Heart right ventricle (tissue), 16 donors: ENCODE measurements at regions of chr22 and their contacts with region 1.

Region 1: DNA sequence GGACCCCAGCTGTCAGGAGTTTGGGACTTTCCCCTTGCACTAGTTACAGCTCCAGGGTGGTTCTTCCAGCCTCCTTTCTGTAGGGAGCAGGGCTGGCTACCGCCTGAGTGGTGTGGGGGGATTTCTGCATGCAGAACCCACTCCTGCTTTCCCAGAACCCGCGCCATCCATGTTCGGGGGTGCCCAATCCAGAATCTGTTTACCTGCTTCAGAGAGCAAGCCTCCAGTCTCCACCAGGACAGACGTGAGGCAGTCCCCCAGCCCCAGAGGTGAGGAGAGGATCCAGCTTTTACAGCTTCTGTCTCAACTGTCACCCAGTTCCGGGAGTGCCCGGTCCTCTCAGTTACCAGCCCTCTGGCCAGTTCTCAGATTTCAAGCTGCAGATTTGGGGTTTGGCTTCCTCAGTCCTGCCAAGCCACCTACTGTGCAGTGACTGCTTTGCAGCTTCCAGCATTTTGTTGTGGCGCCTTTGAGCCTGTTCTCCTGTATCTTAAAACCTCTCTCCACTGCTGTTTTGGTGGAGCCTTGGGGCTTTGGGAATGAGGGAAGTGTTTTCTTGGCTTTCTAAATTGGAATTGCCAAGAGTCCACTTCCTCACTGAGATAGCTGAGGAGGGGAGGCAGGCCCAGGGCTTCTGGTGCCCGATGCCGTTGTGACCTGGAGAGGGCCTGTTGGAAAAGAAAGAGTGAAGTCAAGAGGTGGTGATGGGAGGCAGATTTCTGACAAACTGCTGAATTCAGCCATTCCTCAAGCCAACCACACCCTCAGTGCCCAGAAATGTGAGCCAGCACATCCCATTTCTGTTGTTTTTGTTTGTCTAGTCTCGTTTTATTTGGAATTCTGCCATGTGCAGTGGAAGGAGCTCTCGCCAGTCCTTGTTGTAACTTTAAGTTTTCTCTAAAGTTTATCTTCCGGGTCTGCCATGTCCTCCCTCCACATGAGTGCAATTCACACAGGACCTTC is 513.3 kb downstream of the TBC1D22A start:
- DNase-seq: no peak
- ATAC-seq: peak in 1 of 8 donors; percentile 9
- H3K4me3 ChIP-seq: no peak overlapping the region
- H3K27ac ChIP-seq: no peak overlapping the region
- H3K4me1 ChIP-seq: no peaks in the 10 kb centered on the region
- H3K27me3 ChIP-seq: peaks cover 0 to 49% (median 33%) of the 10 kb centered on the region in 7 donors
- CTCF ChIP-seq: no peak

Region 2: GRCh38 chr22:47289336-47289995 is 13.7 kb after region 1 on chr22:
- intact Hi-C with region 1: loop called in 1 of 10 experiments (anchors 2 kb)
- DNase-seq: no peak
- ATAC-seq: no peak
- H3K4me3 ChIP-seq: no peak overlapping the region
- H3K27ac ChIP-seq: no peak overlapping the region
- H3K4me1 ChIP-seq: no peaks in the 10 kb centered on the region
- H3K27me3 ChIP-seq: peaks cover 0 to 40% (median 13%) of the 10 kb centered on the region in 7 donors
- CTCF ChIP-seq: no peak

Region 3: GRCh38 chr22:47307326-47307725 is 31.6 kb after region 1 on chr22:
- intact Hi-C with region 1: no loop called
- DNase-seq: no peak
- ATAC-seq: no peak
- H3K4me3 ChIP-seq: no peak overlapping the region
- H3K27ac ChIP-seq: no peak overlapping the region
- H3K4me1 ChIP-seq: no peaks in the 10 kb centered on the region
- H3K27me3 ChIP-seq: peaks cover 0 to 12% (median 0%) of the 10 kb centered on the region in 7 donors
- CTCF ChIP-seq: no peak